Gastrocnemius medialis (tissue), 4 donors: ENCODE measurements at regions of chr5 and their contacts with region 1.

Region 1: DNA sequence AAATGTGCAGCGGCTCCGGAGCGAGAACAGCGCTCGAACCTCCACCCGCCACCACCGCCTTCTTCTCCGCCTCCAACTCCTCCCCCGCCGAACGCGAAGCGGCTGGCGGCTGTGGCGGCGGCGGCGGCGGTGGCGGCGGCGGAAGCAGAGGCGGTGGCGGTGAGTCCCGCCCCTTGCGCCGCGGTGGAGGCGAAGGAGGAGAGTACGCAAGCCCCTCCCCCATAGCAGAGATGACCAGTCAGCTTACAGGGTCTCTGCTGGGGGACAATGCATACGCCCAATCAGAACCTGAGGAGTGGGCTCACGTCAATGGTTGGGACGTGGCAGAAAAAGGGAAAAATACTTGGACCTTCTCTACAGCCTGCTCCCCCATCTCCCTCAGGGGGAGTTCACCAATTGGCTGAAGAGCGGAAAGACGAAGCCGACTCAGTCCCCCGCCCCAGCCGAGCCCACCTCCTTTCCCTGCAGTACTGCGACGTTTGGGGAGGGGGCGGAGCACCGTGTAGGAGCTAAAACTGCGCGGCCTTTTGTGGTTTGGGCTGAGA is at the start of gene PJA2:
- DNase-seq: peak; percentile 98 to 99
- ATAC-seq: peak; percentile 91 to 92
- H3K4me3 ChIP-seq: peak within 1 kb of the TSS; percentile 82 to 95 (median 88)
- H3K27ac ChIP-seq: peak within 1 kb of the TSS; percentile 94 to 99 (median 99)
- H3K4me1 ChIP-seq: peaks cover 38 to 46% of the 10 kb centered on the region in 2 donors
- H3K27me3 ChIP-seq: no peaks in the 10 kb centered on the region
- CTCF ChIP-seq: peak; percentile 23 to 59 (median 58)
- POLR2A ChIP-seq: peak; percentile 79 to 80
- total RNA-seq, gene PJA2: 37.6 to 64.9 (median 58.7) TPM

Region 2: DNA sequence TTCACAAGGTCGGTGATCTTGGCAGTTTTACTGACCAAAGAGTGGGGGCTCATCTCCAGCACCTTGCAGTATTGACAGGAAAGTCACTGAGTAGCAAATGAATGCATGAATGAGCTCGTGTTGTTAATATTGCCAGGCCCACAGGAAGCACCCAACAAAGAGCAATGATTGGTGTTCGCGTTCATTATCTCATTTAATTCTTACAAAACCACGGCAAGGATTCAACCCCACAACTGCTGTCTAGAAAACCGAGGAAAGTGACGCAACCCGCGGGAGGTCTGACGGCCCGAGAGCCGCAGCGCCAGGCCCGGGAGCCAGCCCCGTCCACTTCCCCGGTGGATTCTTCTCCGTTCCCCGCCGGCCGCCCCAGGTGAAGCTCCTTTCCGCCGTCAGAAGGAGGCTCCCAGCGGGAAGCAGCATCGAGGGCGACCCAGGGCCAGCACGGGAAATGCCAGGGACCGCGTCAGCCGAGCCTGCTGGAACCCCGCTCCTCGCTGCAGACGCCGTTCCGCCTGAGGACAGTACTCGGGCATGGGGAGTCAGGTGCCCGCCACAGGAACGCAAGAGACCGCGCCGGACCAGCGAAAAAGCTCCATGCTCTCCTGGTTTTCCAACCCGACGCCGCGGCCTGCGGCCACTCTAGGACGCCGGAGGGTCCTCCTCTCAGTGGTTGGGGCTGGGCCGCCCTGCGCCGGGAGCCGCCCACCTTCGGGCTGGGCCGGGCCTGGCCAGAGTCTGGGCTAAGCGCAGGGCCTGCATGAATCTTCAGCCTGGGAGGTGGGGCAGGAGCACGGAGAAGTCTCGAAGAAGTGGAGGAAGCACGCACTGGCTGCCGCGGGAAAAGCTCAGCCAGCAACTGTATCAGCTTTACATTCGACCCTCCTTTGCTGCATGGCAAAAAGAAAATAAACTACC is 682.0 kb before region 1 on chr5:
- in situ Hi-C with region 1: loop called in 1 of 4 experiments (anchors 25 kb)
- intact Hi-C with region 1: loop called (anchors 5 kb)
- DNase-seq: peak; percentile 82 to 90
- ATAC-seq: peak; percentile 93 to 96
- H3K4me3 ChIP-seq: peak overlapping the region; percentile 74 to 90 (median 86)
- H3K27ac ChIP-seq: peak overlapping the region; percentile 84 to 91 (median 87)
- H3K4me1 ChIP-seq: peaks cover 13 to 15% of the 10 kb centered on the region in 2 donors
- H3K27me3 ChIP-seq: no peaks in the 10 kb centered on the region
- CTCF ChIP-seq: no peak
- POLR2A ChIP-seq: peak; percentile 52 to 64

Region 3: DNA sequence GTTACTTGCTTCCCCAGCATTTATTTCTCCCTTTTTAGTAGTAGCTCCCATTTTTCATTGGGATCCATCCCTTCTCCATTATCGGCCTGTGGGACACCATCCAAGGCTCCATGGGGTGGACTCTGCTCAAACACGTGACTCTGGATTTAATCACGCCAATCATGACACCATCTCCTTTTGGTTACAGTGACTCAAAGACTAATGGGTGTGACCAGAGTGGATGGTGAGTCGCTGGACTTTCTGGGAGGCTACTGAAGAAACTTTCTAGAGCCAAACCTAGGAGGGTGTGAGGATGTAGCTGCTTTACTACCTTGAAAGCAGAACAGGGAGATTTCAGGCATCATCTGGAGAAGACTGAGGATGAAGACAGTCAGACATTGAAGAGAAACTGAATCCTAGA is 93.3 kb before region 1 on chr5:
- in situ Hi-C with region 1: no loop called
- intact Hi-C with region 1: loop called (anchors 5 kb)
- DNase-seq: no peak
- ATAC-seq: peak in 1 of 2 donors; percentile 38
- H3K4me3 ChIP-seq: no peak overlapping the region
- H3K27ac ChIP-seq: peak overlapping the region in 1 of 4 donors; percentile 77
- H3K4me1 ChIP-seq: peaks cover 8 to 19% of the 10 kb centered on the region in 2 donors
- H3K27me3 ChIP-seq: no peaks in the 10 kb centered on the region
- CTCF ChIP-seq: no peak
- POLR2A ChIP-seq: no peak

Region 4: DNA sequence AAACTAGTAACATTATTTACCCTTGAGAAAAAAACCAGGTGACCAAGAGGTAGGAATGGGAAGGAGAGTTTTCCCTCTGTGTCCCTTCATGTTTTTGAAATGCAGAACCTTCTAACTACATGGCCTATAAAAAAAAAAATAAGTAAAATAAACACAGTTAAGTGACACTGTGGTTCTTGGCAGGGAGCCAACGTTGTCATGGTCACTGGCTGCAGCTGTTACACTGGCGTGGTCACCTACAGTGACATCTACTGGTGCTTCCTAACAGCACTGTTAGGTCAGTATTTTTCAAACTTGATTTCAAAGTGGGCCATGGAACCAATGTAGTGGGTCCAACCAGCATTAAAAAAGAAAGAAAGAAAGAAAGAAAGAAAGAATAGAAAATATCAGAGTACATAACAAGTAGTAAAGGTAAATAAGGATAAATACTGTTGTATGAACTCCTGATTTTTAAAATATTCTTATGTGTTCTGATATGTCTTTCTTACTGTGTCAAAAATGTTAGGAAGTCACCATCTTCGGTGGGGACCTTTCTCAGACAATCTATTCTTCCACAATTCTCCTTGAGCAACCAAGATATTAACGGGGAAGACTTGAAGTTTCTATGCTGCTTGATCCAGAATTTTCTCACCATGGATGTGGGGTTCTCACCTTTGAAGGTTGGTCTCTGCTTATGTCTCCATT is 59.0 kb after region 1 on chr5:
- in situ Hi-C with region 1: no loop called
- intact Hi-C with region 1: loop called (anchors 5 kb)
- DNase-seq: peak; percentile 88 to 89
- ATAC-seq: peak; percentile 95 to 100
- H3K4me3 ChIP-seq: no peak overlapping the region
- H3K27ac ChIP-seq: no peak overlapping the region
- H3K4me1 ChIP-seq: peaks cover 0 to 9% of the 10 kb centered on the region in 2 donors
- H3K27me3 ChIP-seq: no peaks in the 10 kb centered on the region
- CTCF ChIP-seq: peak; percentile 42 to 83 (median 64)
- POLR2A ChIP-seq: no peak